ENCODE measurements at regions of chr2 and their contacts with region 1.

Region 1: GRCh38 chr2:127415593-127416505 is 2.4 kb upstream of the PROC start:
- DNase-seq: peak; percentile 90
- ATAC-seq: peak; percentile 94
- H3K4me3 Mint-ChIP-seq: peak overlapping the region; percentile 63
- H3K27ac Mint-ChIP-seq: no peak overlapping the region
- H3K4me1 Mint-ChIP-seq: peaks cover 14% of the 10 kb centered on the region
- H3K27me3 Mint-ChIP-seq: peaks cover 57% of the 10 kb centered on the region
- CTCF ChIP-seq: peak; percentile 59

Region 2: DNA sequence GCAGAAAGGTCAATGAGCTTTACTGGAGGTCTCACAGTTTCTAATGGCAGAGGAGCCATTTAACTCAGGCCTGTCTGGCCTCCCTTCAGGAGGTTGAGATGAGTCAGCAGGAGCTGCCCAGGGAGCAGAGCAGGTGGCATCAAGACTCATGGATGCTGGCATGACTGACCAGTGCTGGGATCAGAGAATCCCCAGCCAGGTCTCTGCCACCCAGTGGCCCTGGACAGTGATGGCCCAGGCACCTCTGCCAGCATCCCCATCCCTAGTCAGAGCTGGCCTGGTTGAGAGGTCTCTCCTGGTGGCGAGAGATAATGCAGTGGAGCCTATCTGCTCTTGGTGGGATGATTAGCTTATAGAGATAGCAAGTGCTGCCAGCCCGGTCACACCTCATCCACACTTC is 716.8 kb before region 1 on chr2:
- CTCF ChIA-PET with region 1: no interaction called
- POLR2A ChIA-PET with region 1: no interaction called
- DNase-seq: no peak
- ATAC-seq: no peak; the same call in 1 of the 2 replicates
- H3K4me3 Mint-ChIP-seq: no peak overlapping the region
- H3K27ac Mint-ChIP-seq: no peak overlapping the region
- H3K4me1 Mint-ChIP-seq: peaks cover 27% of the 10 kb centered on the region
- H3K27me3 Mint-ChIP-seq: peaks cover 3% of the 10 kb centered on the region; the same call in 1 of the 2 replicates
- CTCF ChIP-seq: no peak

Region 3: GRCh38 chr2:127293748-127294562 is 121.9 kb before region 1 on chr2 and contains the start of gene ERCC3:
- CTCF ChIA-PET with region 1: interaction called, 16 read pairs
- POLR2A ChIA-PET with region 1: interaction called, 4 read pairs
- DNase-seq: peak; percentile 81
- ATAC-seq: peak; percentile 97
- H3K4me3 Mint-ChIP-seq: peak within 1 kb of the TSS; percentile 98
- H3K27ac Mint-ChIP-seq: peak within 1 kb of the TSS; percentile 99
- H3K4me1 Mint-ChIP-seq: peaks cover 18% of the 10 kb centered on the region
- H3K27me3 Mint-ChIP-seq: no peaks in the 10 kb centered on the region
- CTCF ChIP-seq: no peak
- total RNA-seq, gene ERCC3: 43.3 to 48.1 TPM (median 43.8 TPM) in 3 replicates

Region 4: DNA sequence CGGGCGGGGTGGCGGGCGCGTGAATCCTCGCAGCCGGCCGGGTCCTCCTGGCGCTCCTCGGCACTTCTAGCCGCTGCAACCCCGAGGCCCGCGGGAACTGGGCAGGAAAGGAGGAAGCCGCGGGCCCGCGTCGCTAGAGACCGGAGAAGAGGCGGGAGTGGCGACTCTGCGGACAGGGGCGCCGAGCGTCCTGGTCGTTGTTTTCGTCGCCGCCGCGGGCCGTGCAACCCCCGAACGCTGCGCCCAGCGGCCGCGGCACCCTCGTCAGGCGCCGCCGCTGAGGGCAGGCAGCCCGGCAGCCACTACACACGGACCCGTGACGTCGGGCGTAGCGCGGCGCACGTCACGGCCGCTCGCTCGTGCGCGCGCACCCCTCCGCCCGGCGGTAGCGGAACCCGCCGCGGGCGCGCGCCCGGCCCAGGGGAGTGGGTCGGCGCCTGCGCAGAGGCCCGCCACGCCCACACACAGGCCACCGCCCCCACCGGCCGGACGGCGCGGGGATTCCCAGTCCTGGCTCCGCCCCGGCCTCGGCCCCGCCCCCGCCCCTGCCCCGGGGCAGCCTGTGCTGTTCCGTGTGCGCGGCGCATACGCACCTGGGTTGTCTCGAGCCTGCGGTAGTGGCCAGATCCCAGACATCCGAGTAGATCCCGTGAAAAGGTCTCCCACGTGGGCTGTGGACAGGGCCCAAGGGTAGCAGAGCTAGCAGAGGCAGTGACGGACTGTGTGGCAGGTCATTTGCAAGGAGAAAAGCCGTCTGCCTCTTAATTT is 28.0 kb before region 1 on chr2 and contains the start of gene MAP3K2:
- CTCF ChIA-PET with region 1: interaction called, 13 read pairs
- POLR2A ChIA-PET with region 1: no interaction called
- DNase-seq: peak; percentile 94
- ATAC-seq: peak; percentile 89
- H3K4me3 Mint-ChIP-seq: peak within 1 kb of the TSS; percentile 93
- H3K27ac Mint-ChIP-seq: peak within 1 kb of the TSS; percentile 96
- H3K4me1 Mint-ChIP-seq: peaks cover 25% of the 10 kb centered on the region
- H3K27me3 Mint-ChIP-seq: no peaks in the 10 kb centered on the region; the same call in 1 of the 2 replicates
- CTCF ChIP-seq: no peak
- total RNA-seq, gene MAP3K2: 26.9 to 31.7 TPM (median 31.3 TPM) in 3 replicates

Region 5: GRCh38 chr2:127400897-127401756 is 14.7 kb before region 1 on chr2:
- CTCF ChIA-PET with region 1: interaction called, 17 read pairs
- POLR2A ChIA-PET with region 1: no interaction called
- DNase-seq: no peak
- ATAC-seq: peak; percentile 33
- H3K4me3 Mint-ChIP-seq: no peak overlapping the region
- H3K27ac Mint-ChIP-seq: no peak overlapping the region
- H3K4me1 Mint-ChIP-seq: peaks cover 18% of the 10 kb centered on the region
- H3K27me3 Mint-ChIP-seq: no peaks in the 10 kb centered on the region; the same call in 1 of the 2 replicates
- CTCF ChIP-seq: no peak

Region 6: DNA sequence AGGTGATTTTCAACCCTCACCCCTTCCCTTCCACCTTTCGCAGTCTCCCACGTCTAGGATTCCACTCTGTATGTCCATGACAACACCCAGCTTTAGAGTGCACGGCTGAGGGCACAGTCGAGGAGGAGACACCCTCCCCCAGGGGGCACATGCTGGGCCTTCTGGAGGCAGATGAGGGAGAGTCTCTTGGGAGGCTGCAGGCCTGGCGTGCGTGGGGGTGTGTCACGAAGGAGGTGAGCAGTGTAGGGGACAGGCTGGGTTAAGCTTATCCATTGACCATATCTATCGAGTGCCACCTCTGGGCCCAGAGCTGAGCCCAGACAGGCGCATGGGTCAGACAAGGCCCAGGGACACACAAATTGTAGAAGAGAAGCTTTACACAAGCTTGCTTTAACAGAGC is 21.2 kb after region 1 on chr2:
- CTCF ChIA-PET with region 1: interaction called, 15 read pairs
- POLR2A ChIA-PET with region 1: no interaction called
- DNase-seq: no peak
- ATAC-seq: no peak
- H3K4me3 Mint-ChIP-seq: no peak overlapping the region
- H3K27ac Mint-ChIP-seq: no peak overlapping the region
- H3K4me1 Mint-ChIP-seq: no peaks in the 10 kb centered on the region
- H3K27me3 Mint-ChIP-seq: no peaks in the 10 kb centered on the region; the same call in 1 of the 2 replicates
- CTCF ChIP-seq: no peak

Region 7: GRCh38 chr2:127453392-127454171 is 37.7 kb after region 1 on chr2:
- CTCF ChIA-PET with region 1: interaction called, 14 read pairs
- POLR2A ChIA-PET with region 1: no interaction called
- DNase-seq: peak; percentile 28
- ATAC-seq: peak; percentile 72
- H3K4me3 Mint-ChIP-seq: no peak overlapping the region
- H3K27ac Mint-ChIP-seq: no peak overlapping the region
- H3K4me1 Mint-ChIP-seq: peaks cover 49% of the 10 kb centered on the region
- H3K27me3 Mint-ChIP-seq: no peaks in the 10 kb centered on the region
- CTCF ChIP-seq: no peak

Region 8: DNA sequence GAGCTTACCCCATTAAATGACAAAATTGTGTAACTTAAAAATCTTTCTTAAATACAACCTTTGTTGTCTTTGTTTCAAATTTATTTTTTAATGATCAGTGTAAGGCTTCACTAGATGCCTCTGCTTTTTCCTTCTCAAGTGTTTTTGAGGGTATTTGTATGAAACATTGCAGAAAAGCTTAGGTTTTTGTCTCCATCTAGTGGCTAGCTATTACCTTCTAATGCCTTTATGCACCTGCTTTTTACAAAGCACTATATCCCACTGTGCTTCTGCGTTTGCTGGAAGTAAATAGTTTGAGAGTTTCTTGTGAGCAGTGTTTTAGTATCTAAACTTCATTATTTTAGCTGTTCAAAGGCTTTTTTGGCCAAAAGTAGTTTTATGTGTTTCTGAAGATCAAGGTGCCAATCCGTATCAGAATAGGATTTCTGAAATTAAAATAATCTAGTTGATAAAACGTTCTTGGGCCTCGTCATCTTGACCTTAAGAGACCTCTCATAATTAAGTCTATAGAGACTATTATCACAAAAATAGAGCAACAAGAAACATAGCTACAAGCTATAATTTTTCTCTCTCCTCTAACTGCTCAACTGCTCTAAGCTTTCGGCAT is 63.5 kb after region 1 on chr2:
- CTCF ChIA-PET with region 1: interaction called, 21 read pairs
- POLR2A ChIA-PET with region 1: no interaction called
- DNase-seq: no peak
- ATAC-seq: peak; percentile 56
- H3K4me3 Mint-ChIP-seq: no peak overlapping the region
- H3K27ac Mint-ChIP-seq: no peak overlapping the region
- H3K4me1 Mint-ChIP-seq: peaks cover 34% of the 10 kb centered on the region
- H3K27me3 Mint-ChIP-seq: no peaks in the 10 kb centered on the region
- CTCF ChIP-seq: peak; percentile 39; the same call in 1 of the 2 replicates

Measured in WTC11 (cell line).